ENCODE measurements at regions of chr18 and their contacts with region 1.

Region 1: GRCh38 chr18:46080156-46080555 is 8.1 kb upstream of the PSTPIP2 start:
- DNase-seq: no peak
- H3K4me3 ChIP-seq: no peak overlapping the region
- H3K4me3 Mint-ChIP-seq: no peak overlapping the region
- H3K27ac ChIP-seq: peak overlapping the region in 1 of 2 donors; percentile 20
- H3K27ac Mint-ChIP-seq: peak overlapping the region in 2 of 7 donors; percentile 13 to 16
- H3K4me1 ChIP-seq: no peaks in the 10 kb centered on the region
- H3K4me1 Mint-ChIP-seq: no peaks in the 10 kb centered on the region
- H3K27me3 ChIP-seq: no peaks in the 10 kb centered on the region
- H3K27me3 Mint-ChIP-seq: no peaks in the 10 kb centered on the region
- CTCF ChIP-seq: no peak

Region 2: GRCh38 chr18:45910405-45911023 is 169.6 kb before region 1 on chr18:
- intact Hi-C with region 1: loop called in 1 of 2 experiments (anchors 10 kb)
- DNase-seq: peak; percentile 23 to 27 (median 26)
- H3K4me3 ChIP-seq: no peak overlapping the region
- H3K4me3 Mint-ChIP-seq: no peak overlapping the region
- H3K27ac ChIP-seq: no peak overlapping the region
- H3K27ac Mint-ChIP-seq: no peak overlapping the region
- H3K4me1 ChIP-seq: no peaks in the 10 kb centered on the region
- H3K4me1 Mint-ChIP-seq: no peaks in the 10 kb centered on the region
- H3K27me3 ChIP-seq: no peaks in the 10 kb centered on the region
- H3K27me3 Mint-ChIP-seq: no peaks in the 10 kb centered on the region
- CTCF ChIP-seq: peak; percentile 79